ENCODE measurements at regions of chr2 and their contacts with region 1.

Region 1: DNA sequence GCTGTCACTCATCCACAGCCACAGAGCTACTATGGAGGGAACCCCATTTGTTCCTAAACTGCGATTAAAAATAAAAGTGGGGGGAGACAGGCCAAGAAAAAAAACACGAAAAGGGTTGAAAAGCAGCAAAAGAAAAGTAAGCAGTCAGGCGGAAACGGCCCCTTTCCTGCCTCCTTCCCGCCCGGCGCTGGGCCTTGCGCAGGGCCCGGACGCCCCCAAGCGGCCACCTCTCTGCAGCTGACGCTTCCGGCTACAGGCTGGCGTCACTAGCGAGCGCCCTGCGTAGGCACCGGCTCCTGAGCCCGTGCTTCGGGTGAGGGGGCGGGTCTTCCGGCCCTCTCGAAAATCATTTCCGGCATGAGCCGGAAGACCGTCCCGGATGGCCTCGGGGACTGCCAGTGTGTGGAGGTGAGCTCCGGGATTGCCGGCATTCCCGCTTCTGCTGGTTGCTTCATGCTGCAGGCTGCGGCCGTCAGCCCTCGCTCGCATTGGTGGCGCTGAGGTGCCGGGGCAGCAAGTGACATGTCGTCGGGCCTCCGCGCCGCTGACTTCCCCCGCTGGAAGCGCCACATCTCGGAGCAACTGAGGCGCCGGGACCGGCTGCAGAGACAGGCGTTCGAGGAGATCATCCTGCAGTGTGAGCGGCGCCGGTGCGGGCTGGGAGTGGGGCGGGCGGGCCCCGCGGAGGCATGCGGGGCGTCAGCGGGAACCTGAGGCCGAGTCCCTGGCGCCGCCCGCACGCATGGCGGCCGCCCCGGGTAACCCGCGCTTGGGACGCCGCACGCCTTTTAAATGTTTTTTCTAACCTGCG is at the start of gene ATG16L1:
- DNase-seq: peak; percentile 94
- ATAC-seq: peak; percentile 100
- H3K4me3 ChIP-seq: peak within 1 kb of the TSS; percentile 81
- H3K27ac ChIP-seq: peak within 1 kb of the TSS; percentile 58
- H3K4me1 ChIP-seq: no peaks in the 10 kb centered on the region
- H3K27me3 ChIP-seq: no peaks in the 10 kb centered on the region
- CTCF ChIP-seq: peak; percentile 100
- POLR2A ChIP-seq: peak; percentile 74
- RAD21 ChIP-seq: peak; percentile 98
- total RNA-seq, gene ATG16L1: 26.2 and 26.9 TPM in 2 replicates

Region 2: GRCh38 chr2:232611551-232612218 is 639.8 kb before region 1 on chr2:
- CTCF ChIA-PET with region 1: no interaction called
- POLR2A ChIA-PET with region 1: no interaction called
- dilution Hi-C with region 1: no loop called
- in situ Hi-C with region 1: loop called (anchors 5 kb)
- intact Hi-C with region 1: loop called (anchors 1 kb)
- DNase-seq: peak; percentile 54
- ATAC-seq: peak; percentile 86
- H3K4me3 ChIP-seq: no peak overlapping the region
- H3K27ac ChIP-seq: no peak overlapping the region
- H3K4me1 ChIP-seq: peaks cover 3% of the 10 kb centered on the region; the same call in 1 of the 2 replicates
- H3K27me3 ChIP-seq: no peaks in the 10 kb centered on the region
- CTCF ChIP-seq: peak; percentile 53
- POLR2A ChIP-seq: no peak
- RAD21 ChIP-seq: peak; percentile 28; the same call in 1 of the 2 replicates

Region 3: GRCh38 chr2:232854082-232854481 is 397.4 kb before region 1 on chr2:
- CTCF ChIA-PET with region 1: interaction called, 3 read pairs
- POLR2A ChIA-PET with region 1: no interaction called
- dilution Hi-C with region 1: no loop called
- in situ Hi-C with region 1: loop called (anchors 5 kb)
- intact Hi-C with region 1: loop called (anchors 1 kb)
- DNase-seq: peak; percentile 88
- ATAC-seq: peak; percentile 77
- H3K4me3 ChIP-seq: no peak overlapping the region
- H3K27ac ChIP-seq: no peak overlapping the region
- H3K4me1 ChIP-seq: peaks cover 8% of the 10 kb centered on the region
- H3K27me3 ChIP-seq: no peaks in the 10 kb centered on the region
- CTCF ChIP-seq: no peak
- POLR2A ChIP-seq: no peak
- RAD21 ChIP-seq: no peak

Region 4: DNA sequence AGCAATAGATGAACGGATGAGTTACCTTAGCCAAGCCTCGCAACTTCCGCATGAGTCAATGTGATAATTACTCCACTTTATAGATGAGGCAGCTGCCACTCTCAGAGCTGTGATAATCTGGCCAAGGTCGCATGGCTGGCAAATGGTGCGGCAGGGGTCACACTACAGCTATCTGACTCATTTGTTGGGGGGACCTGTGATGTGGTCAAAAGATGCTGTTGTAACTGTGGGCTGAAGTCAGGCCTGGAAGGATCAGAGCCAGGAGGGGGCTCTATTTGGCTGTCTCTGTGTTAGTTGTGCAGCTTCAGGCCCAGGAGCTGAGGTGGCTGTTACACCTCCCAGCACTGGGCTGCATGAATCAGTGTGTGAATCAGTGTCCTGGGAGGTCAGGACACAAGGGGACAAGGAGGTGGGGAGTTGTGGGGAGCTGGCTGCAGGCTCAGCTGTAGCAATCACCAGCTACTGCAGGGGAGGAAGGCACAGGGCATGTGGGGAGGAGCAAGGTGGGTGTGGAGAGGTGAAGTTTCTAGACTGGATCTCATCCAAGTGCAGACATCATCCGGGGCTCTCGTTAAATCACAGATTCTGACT is 271.5 kb before region 1 on chr2:
- CTCF ChIA-PET with region 1: no interaction called
- POLR2A ChIA-PET with region 1: no interaction called
- dilution Hi-C with region 1: no loop called
- in situ Hi-C with region 1: no loop called
- intact Hi-C with region 1: loop called (anchors 10 kb)
- DNase-seq: peak; percentile 77
- ATAC-seq: peak; percentile 84
- H3K4me3 ChIP-seq: no peak overlapping the region
- H3K27ac ChIP-seq: no peak overlapping the region
- H3K4me1 ChIP-seq: peaks cover 3% of the 10 kb centered on the region; the same call in 1 of the 2 replicates
- H3K27me3 ChIP-seq: peaks cover 16% of the 10 kb centered on the region
- CTCF ChIP-seq: peak; percentile 36
- POLR2A ChIP-seq: no peak
- RAD21 ChIP-seq: peak; percentile 54

Region 5: DNA sequence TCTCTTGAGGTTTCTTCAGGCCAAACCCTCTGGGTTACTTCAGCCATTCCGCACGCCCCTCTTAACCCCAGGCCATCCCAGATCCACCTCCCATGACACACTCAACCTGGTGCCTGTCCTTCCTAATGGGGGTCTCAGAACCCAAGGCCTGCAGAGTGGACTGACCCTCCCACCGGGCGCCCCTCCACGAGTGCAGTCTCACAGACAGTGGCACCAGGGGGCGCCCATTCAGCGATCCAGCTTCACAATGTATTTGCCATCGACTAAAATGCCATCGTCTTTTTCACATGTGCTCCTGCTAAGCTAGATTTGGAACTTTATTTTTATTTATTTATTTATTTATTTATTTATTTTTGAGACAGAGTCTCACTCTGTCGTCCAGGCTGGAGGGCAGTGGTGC is 152.9 kb before region 1 on chr2:
- CTCF ChIA-PET with region 1: no interaction called
- POLR2A ChIA-PET with region 1: interaction called, 4 read pairs
- dilution Hi-C with region 1: no loop called
- in situ Hi-C with region 1: no loop called
- intact Hi-C with region 1: loop called (anchors 1 kb)
- DNase-seq: peak; percentile 5
- ATAC-seq: no peak
- H3K4me3 ChIP-seq: no peak overlapping the region
- H3K27ac ChIP-seq: no peak overlapping the region
- H3K4me1 ChIP-seq: no peaks in the 10 kb centered on the region
- H3K27me3 ChIP-seq: peaks cover 8% of the 10 kb centered on the region
- CTCF ChIP-seq: 0 out of 2 replicates have a peak, but pooled peaks have one; percentile 26
- POLR2A ChIP-seq: no peak
- RAD21 ChIP-seq: no peak

Region 6: DNA sequence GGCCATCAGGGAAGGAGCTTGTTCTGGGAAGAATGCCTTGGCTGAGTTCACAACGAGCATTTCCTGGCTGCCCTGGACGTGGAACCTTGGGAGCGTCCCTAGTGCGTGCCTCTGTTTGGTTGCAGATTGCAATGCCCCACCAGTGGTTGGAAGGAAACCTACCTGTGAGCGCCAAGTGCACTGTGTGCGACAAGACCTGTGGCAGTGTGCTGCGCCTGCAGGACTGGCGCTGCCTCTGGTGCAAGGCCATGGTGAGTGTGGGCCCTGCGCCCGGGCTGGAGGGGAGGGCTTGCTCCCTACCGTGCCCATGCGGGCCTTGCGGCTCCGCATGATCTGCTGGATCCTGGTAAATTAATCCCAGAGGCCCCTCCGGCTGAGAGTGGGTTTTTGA is 184.7 kb after region 1 on chr2:
- CTCF ChIA-PET with region 1: no interaction called
- POLR2A ChIA-PET with region 1: no interaction called
- dilution Hi-C with region 1: no loop called
- in situ Hi-C with region 1: no loop called
- intact Hi-C with region 1: no loop called
- DNase-seq: no peak
- ATAC-seq: no peak
- H3K4me3 ChIP-seq: no peak overlapping the region
- H3K27ac ChIP-seq: no peak overlapping the region
- H3K4me1 ChIP-seq: no peaks in the 10 kb centered on the region
- H3K27me3 ChIP-seq: no peaks in the 10 kb centered on the region
- CTCF ChIP-seq: no peak
- POLR2A ChIP-seq: no peak
- RAD21 ChIP-seq: no peak

Region 7: DNA sequence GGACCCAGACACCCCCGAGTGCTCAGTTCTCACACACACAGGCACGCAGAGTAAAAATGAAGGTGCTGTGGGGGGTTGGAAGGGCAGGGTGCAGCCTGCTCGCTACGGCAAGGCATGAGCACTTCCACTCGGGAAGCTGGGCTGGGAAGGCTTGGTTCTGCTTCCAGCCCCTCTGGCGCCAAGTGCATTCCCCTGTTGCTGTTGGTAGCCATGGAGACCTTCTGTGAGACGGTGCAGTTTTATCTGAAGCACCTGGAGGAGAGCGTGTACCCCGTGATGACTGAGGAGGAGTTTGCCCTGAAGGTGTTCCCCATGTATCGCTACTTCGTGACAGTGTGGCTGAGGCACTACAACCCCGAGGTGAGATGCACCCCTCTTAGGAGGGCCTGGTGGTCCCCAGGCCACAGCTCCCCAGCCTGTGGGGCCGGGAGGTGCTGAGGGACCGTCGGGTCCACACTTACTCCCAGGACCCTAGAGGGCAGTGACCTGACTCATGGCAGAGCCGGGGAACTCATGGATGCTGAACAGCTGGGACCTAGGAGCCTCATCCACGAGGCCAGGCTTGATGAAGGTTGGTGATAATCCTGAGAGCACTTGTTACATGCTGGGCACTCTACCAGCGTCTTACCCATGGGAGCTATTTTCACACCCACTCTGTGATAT is 542.1 kb after region 1 on chr2:
- CTCF ChIA-PET with region 1: no interaction called
- POLR2A ChIA-PET with region 1: no interaction called
- dilution Hi-C with region 1: no loop called
- in situ Hi-C with region 1: no loop called
- intact Hi-C with region 1: no loop called
- DNase-seq: no peak
- ATAC-seq: no peak
- H3K4me3 ChIP-seq: no peak overlapping the region
- H3K27ac ChIP-seq: no peak overlapping the region
- H3K4me1 ChIP-seq: no peaks in the 10 kb centered on the region
- H3K27me3 ChIP-seq: peaks cover 10% of the 10 kb centered on the region
- CTCF ChIP-seq: no peak
- POLR2A ChIP-seq: no peak
- RAD21 ChIP-seq: no peak

Measured in IMR-90 (cell line).